Naive thymus-derived CD4-positive, alpha-beta T cell (primary cell): ENCODE measurements at regions of chr17 and their contacts with region 1.

Region 1: GRCh38 chr17:76452660-76453430 is at the start of gene UBE2O:
- DNase-seq: peak; percentile 92 to 97 (median 95)
- ATAC-seq: peak; percentile 97
- H3K4me3 ChIP-seq: peak within 1 kb of the TSS; percentile 73
- H3K4me3 Mint-ChIP-seq: peak within 1 kb of the TSS; percentile 86 to 95 (median 88)
- H3K27ac ChIP-seq: peak within 1 kb of the TSS; percentile 89
- H3K27ac Mint-ChIP-seq: peak within 1 kb of the TSS; percentile 81 to 98 (median 93)
- H3K4me1 ChIP-seq: peaks cover 11 to 23% of the 10 kb centered on the region in 2 donors
- H3K4me1 Mint-ChIP-seq: peaks cover 17 to 46% (median 42%) of the 10 kb centered on the region in 7 donors
- H3K27me3 ChIP-seq: no peaks in the 10 kb centered on the region
- H3K27me3 Mint-ChIP-seq: no peaks in the 10 kb centered on the region
- total RNA-seq, gene UBE2O: 32.6 to 50.8 (median 41.6) TPM

Region 2: DNA sequence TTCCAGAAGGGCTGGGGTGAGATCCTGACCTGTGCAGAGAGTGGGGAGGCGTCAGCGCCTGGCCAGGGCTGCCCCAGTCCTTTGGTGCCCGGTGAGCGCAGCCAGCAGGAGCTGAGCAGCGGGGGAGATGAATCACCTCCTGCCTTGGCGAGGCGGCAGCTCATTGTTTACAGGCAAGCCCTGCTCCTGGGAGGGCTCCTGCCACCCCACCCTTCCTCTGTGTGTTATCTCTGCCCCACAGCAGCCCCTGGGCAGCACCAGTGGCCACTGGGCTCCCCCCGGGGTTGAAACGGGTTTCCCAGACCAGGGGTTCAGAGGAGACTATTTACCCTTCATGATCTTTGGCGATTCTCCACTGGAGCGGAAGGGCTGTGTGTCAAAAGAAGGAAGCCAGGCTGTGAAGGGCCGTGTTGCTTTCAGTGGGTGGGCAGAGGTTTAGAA is 745.7 kb before region 1 on chr17:
- CTCF ChIA-PET with region 1: no interaction called
- POLR2A ChIA-PET with region 1: no interaction called
- intact Hi-C with region 1: no loop called
- DNase-seq: no peak
- ATAC-seq: no peak
- H3K4me3 ChIP-seq: no peak overlapping the region
- H3K4me3 Mint-ChIP-seq: no peak overlapping the region
- H3K27ac ChIP-seq: no peak overlapping the region
- H3K27ac Mint-ChIP-seq: peak overlapping the region in 2 of 9 donors; percentile 20 to 76
- H3K4me1 ChIP-seq: no peaks in the 10 kb centered on the region
- H3K4me1 Mint-ChIP-seq: peaks cover 0 to 8% (median 0%) of the 10 kb centered on the region in 7 donors
- H3K27me3 ChIP-seq: no peaks in the 10 kb centered on the region
- H3K27me3 Mint-ChIP-seq: peaks cover 0 to 9% (median 0%) of the 10 kb centered on the region in 5 donors

Region 3: GRCh38 chr17:75978938-75979704 is 473.7 kb before region 1 on chr17 and contains the starts of genes ACOX1 and TEN1:
- CTCF ChIA-PET with region 1: no interaction called
- POLR2A ChIA-PET with region 1: no interaction called
- intact Hi-C with region 1: loop called (anchors 1 to 2 kb)
- DNase-seq: peak; percentile 84 to 96 (median 93)
- ATAC-seq: peak; percentile 95
- H3K4me3 ChIP-seq: peak within 1 kb of the TSS; percentile 89
- H3K4me3 Mint-ChIP-seq: peak within 1 kb of the TSS; percentile 91 to 99 (median 98)
- H3K27ac ChIP-seq: peak within 1 kb of the TSS; percentile 100
- H3K27ac Mint-ChIP-seq: peak within 1 kb of the TSS; percentile 98 to 100 (median 100)
- H3K4me1 ChIP-seq: peaks cover 5 to 6% of the 10 kb centered on the region in 2 donors
- H3K4me1 Mint-ChIP-seq: peaks cover 26 to 53% (median 47%) of the 10 kb centered on the region in 7 donors
- H3K27me3 ChIP-seq: no peaks in the 10 kb centered on the region
- H3K27me3 Mint-ChIP-seq: no peaks in the 10 kb centered on the region
- total RNA-seq, gene ACOX1: 22.8 to 35.0 (median 33.5) TPM
- total RNA-seq, gene TEN1: 13.1 to 20.1 (median 13.8) TPM

Region 4: DNA sequence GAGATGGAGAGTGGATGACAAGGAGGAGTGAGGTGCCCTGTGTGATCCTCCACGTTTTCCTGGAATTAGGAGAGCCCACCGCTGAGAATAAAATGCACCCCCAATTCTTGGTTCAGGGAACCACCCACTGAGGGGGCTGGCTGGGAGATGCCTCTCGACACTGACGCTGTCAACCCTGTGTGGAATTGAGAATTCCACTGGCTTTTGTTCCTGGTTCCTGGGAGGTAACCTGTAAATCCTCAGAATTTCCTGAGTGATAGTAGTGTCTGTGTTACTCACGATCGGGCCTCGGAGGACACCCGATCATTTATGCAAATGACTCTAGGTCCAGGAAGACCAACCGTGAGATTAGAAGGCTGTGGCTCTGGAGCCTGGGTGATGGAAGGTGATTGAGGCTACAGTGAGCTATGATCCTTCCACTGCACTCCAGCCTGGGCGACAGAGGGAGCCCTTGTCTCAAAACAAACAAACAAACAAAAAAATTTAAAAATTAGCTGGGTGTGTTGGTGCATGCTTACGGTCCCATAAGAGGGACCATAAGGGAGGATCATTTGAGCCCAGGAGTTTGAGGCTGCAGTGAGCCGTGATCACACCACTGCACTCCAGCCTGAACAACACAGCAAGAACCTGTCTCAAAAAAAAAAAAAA is 87.5 kb before region 1 on chr17:
- CTCF ChIA-PET with region 1: no interaction called
- POLR2A ChIA-PET with region 1: no interaction called
- intact Hi-C with region 1: no loop called
- DNase-seq: no peak
- ATAC-seq: no peak
- H3K4me3 ChIP-seq: no peak overlapping the region
- H3K4me3 Mint-ChIP-seq: no peak overlapping the region
- H3K27ac ChIP-seq: no peak overlapping the region
- H3K27ac Mint-ChIP-seq: no peak overlapping the region
- H3K4me1 ChIP-seq: no peaks in the 10 kb centered on the region
- H3K4me1 Mint-ChIP-seq: peaks cover 0 to 3% (median 0%) of the 10 kb centered on the region in 7 donors
- H3K27me3 ChIP-seq: no peaks in the 10 kb centered on the region
- H3K27me3 Mint-ChIP-seq: peaks cover 0 to 8% (median 0%) of the 10 kb centered on the region in 5 donors

Region 5: GRCh38 chr17:76384222-76384986 is 68.4 kb before region 1 on chr17 and contains the start of gene SPHK1:
- CTCF ChIA-PET with region 1: no interaction called
- POLR2A ChIA-PET with region 1: interaction called, 3 read pairs
- intact Hi-C with region 1: loop called (anchors 1 to 2 kb)
- DNase-seq: peak in 7 of 9 donors; percentile 23 to 87 (median 42)
- ATAC-seq: peak; percentile 68
- H3K4me3 ChIP-seq: peak within 1 kb of the TSS; percentile 63
- H3K4me3 Mint-ChIP-seq: peak within 1 kb of the TSS; percentile 86 to 94 (median 92)
- H3K27ac ChIP-seq: no peak within 1 kb of the TSS
- H3K27ac Mint-ChIP-seq: peak within 1 kb of the TSS; percentile 18 to 88 (median 67)
- H3K4me1 ChIP-seq: peaks cover 0 to 15% of the 10 kb centered on the region in 2 donors
- H3K4me1 Mint-ChIP-seq: peaks cover 4 to 17% (median 11%) of the 10 kb centered on the region in 7 donors
- H3K27me3 ChIP-seq: no peaks in the 10 kb centered on the region
- H3K27me3 Mint-ChIP-seq: peaks cover 0 to 2% (median 0%) of the 10 kb centered on the region in 5 donors
- total RNA-seq, gene SPHK1: 0.43 to 14.1 (median 1.9) TPM

Region 6: DNA sequence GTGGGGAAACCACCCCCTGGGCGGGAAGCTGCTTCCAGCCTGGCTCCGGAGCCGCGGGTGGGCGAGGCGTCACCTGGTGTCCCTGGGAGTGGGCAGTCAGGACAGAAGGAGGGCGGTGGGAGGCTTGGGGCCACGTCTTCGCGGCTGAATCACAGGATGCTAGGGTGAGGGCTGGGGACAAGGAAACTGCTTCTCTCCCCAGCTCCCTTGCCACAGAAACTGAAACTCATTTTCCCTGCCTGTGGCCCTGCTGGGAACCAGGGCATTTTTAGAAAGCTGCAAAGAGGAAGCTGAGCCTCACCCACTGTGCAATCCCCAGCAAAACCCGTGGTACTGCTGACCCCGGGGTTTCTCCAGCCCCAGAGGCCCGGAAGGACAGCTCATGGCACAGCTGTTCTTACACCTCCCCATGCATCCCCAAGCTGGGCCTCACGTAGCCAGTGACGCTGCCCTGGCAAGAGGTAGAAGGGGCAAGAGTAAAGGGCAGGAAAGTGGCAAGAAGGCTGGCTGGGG is 40.2 kb after region 1 on chr17:
- CTCF ChIA-PET with region 1: interaction called, 4 read pairs
- POLR2A ChIA-PET with region 1: no interaction called
- intact Hi-C with region 1: loop called in 1 of 2 experiments (anchors 2 kb)
- DNase-seq: peak in 2 of 9 donors; percentile 22 to 70
- ATAC-seq: peak; percentile 84
- H3K4me3 ChIP-seq: peak overlapping the region; percentile 65
- H3K4me3 Mint-ChIP-seq: peak overlapping the region; percentile 72 to 92 (median 82)
- H3K27ac ChIP-seq: peak overlapping the region; percentile 0
- H3K27ac Mint-ChIP-seq: peak overlapping the region; percentile 44 to 99 (median 76)
- H3K4me1 ChIP-seq: peaks cover 32 to 47% of the 10 kb centered on the region in 2 donors
- H3K4me1 Mint-ChIP-seq: peaks cover 12 to 76% (median 32%) of the 10 kb centered on the region in 7 donors
- H3K27me3 ChIP-seq: no peaks in the 10 kb centered on the region
- H3K27me3 Mint-ChIP-seq: no peaks in the 10 kb centered on the region

Region 7: GRCh38 chr17:76506408-76507349 is 53.8 kb after region 1 on chr17:
- CTCF ChIA-PET with region 1: interaction called, 5 read pairs
- POLR2A ChIA-PET with region 1: interaction called, 8 read pairs
- intact Hi-C with region 1: loop called (anchors 1 kb)
- DNase-seq: peak; percentile 74 to 94 (median 86)
- ATAC-seq: peak; percentile 88
- H3K4me3 ChIP-seq: no peak overlapping the region
- H3K4me3 Mint-ChIP-seq: no peak overlapping the region
- H3K27ac ChIP-seq: no peak overlapping the region
- H3K27ac Mint-ChIP-seq: peak overlapping the region in 6 of 9 donors; percentile 5 to 60 (median 42)
- H3K4me1 ChIP-seq: peaks cover 13 to 21% of the 10 kb centered on the region in 2 donors
- H3K4me1 Mint-ChIP-seq: peaks cover 5 to 45% (median 10%) of the 10 kb centered on the region in 7 donors
- H3K27me3 ChIP-seq: no peaks in the 10 kb centered on the region
- H3K27me3 Mint-ChIP-seq: peaks cover 0 to 13% (median 0%) of the 10 kb centered on the region in 5 donors

Region 8: GRCh38 chr17:76557368-76558197 is 104.7 kb after region 1 on chr17:
- CTCF ChIA-PET with region 1: no interaction called
- POLR2A ChIA-PET with region 1: no interaction called
- intact Hi-C with region 1: loop called (anchors 1 to 2 kb)
- DNase-seq: peak; percentile 82 to 95 (median 92)
- ATAC-seq: peak; percentile 92
- H3K4me3 ChIP-seq: peak overlapping the region; percentile 77
- H3K4me3 Mint-ChIP-seq: peak overlapping the region; percentile 92 to 99 (median 98)
- H3K27ac ChIP-seq: peak overlapping the region; percentile 93
- H3K27ac Mint-ChIP-seq: peak overlapping the region; percentile 90 to 99 (median 96)
- H3K4me1 ChIP-seq: peaks cover 23 to 34% of the 10 kb centered on the region in 2 donors
- H3K4me1 Mint-ChIP-seq: peaks cover 25 to 66% (median 55%) of the 10 kb centered on the region in 7 donors
- H3K27me3 ChIP-seq: no peaks in the 10 kb centered on the region
- H3K27me3 Mint-ChIP-seq: no peaks in the 10 kb centered on the region

Region 9: DNA sequence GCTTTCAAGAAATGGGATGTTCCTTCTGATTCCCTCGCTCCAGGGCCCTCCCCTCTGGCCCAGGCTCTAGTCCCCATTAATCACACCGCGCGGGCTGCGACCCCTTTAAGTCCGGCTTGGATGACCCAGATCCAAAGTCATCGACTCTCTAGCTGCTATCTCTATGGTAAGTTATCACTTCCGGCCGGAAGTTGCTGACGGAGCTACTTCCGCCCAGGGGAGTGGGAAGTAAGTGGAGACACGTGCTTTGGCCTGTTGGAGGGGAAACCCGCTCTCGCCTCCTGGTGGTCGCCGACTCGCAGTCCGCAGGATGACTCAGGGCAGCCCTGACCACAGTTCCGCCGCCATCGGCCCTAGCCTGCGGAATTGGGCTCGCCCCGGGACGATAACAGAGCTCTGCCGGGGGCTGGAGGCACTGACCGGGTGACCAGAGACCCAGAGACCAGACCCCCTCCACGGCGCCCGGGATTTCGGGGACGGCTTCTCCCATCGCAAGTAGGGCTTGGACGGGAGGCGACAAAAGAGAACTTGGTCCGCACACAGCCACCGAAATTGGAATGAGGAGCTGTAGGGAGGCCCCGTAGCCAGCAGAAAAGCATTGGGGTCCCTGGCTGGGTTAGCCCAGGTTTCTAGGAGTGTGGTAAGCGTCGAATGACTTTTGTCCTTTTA is 635.7 kb after region 1 on chr17:
- CTCF ChIA-PET with region 1: no interaction called
- POLR2A ChIA-PET with region 1: no interaction called
- intact Hi-C with region 1: loop called in 1 of 2 experiments (anchors 5 kb)
- DNase-seq: peak; percentile 61 to 86 (median 84)
- ATAC-seq: peak; percentile 96
- H3K4me3 ChIP-seq: peak overlapping the region; percentile 62
- H3K4me3 Mint-ChIP-seq: peak overlapping the region; percentile 89 to 100 (median 97)
- H3K27ac ChIP-seq: peak overlapping the region; percentile 89
- H3K27ac Mint-ChIP-seq: peak overlapping the region; percentile 91 to 100 (median 98)
- H3K4me1 ChIP-seq: peaks cover 23 to 31% of the 10 kb centered on the region in 2 donors
- H3K4me1 Mint-ChIP-seq: peaks cover 29 to 63% (median 51%) of the 10 kb centered on the region in 7 donors
- H3K27me3 ChIP-seq: no peaks in the 10 kb centered on the region
- H3K27me3 Mint-ChIP-seq: peaks cover 0 to 6% (median 0%) of the 10 kb centered on the region in 5 donors